Brain microvascular endothelial cell (primary cell): ENCODE measurements at regions of chr1 and their contacts with region 1.

Region 1: GRCh38 chr1:28392027-28392652 is 22.6 kb downstream of the PHACTR4 start:
- DNase-seq: peak; percentile 87
- H3K4me3 ChIP-seq: no peak overlapping the region
- H3K27ac ChIP-seq: peak overlapping the region; percentile 40
- H3K27me3 ChIP-seq: no peaks in the 10 kb centered on the region
- CTCF ChIP-seq: no peak

Region 2: DNA sequence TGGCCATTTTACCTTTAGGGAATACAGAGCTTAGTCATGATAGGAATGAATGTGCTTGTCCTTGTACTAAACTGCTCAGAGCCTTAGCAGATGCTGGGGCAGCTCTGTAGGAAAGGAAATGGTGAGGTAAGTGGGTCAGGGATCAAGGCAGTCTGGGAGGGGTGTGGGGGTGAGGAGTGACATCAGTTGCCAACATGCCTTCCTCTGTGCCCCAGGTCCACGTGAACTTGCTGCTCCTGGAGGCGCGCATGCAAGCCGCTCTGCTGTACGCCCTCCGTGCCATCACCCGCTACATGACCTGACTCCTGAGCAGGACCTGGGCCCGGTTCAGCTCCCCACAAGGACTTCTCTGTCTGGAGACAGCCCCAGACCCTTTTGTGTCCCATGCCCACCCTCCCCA is 111.6 kb before region 1 on chr1:
- in situ Hi-C with region 1: no loop called
- DNase-seq: no peak
- H3K4me3 ChIP-seq: no peak overlapping the region
- H3K27ac ChIP-seq: no peak overlapping the region
- H3K27me3 ChIP-seq: no peaks in the 10 kb centered on the region
- CTCF ChIP-seq: no peak

Region 3: DNA sequence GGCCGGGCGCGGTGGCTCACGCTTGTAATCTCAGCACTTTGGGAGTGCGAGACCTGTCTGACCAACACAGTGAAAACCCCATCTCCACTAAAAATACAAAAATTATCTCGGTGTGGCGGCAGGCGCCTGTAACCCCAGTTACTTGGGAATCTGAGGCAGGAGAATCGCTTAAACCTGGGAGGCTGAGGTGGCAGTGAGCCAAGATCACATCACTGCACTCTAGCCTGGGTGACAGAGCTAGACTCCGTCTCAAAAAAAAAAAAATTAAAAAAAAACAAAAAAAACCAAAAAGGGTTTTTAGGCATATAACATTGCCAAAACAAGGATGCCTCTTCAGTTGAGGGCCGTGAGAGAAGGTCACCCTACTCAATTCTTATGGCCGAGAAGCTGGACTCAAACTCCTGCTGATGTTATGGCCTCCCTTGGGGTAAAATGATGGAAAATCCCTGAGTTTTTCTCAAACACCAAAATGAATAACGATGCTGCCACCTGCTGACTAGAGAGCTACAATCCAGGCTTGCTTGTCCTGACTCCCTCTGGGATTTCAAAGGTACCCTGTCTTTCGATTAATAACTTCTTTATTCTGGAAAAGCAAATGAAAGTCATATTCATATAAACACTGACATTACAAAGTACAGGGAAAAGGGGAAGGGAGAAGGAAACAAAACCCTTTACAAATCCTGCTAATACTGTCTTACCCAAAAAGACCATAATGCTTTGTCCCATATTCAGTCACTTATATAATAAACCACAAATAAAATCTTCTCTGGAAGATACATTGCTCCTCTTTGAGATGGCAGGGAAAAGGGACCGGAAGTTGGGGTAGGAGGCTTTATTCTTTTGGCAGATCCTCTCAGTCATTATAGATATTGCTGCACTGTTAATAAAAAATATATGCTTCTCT is 210.6 kb after region 1 on chr1:
- in situ Hi-C with region 1: loop called (anchors 25 kb)
- DNase-seq: peak; percentile 75
- H3K4me3 ChIP-seq: no peak overlapping the region
- H3K27ac ChIP-seq: no peak overlapping the region
- H3K27me3 ChIP-seq: no peaks in the 10 kb centered on the region
- CTCF ChIP-seq: peak; percentile 82

Region 4: GRCh38 chr1:28736450-28737306 is 344.5 kb after region 1 on chr1 and contains the start of gene YTHDF2:
- in situ Hi-C with region 1: no loop called
- DNase-seq: peak; percentile 93
- H3K4me3 ChIP-seq: peak within 1 kb of the TSS; percentile 92
- H3K27ac ChIP-seq: peak within 1 kb of the TSS; percentile 79
- H3K27me3 ChIP-seq: no peaks in the 10 kb centered on the region
- CTCF ChIP-seq: peak; percentile 84